CD4-positive, alpha-beta memory T cell (primary cell): ENCODE measurements at regions of chr22 and their contacts with region 1.

Region 1: DNA sequence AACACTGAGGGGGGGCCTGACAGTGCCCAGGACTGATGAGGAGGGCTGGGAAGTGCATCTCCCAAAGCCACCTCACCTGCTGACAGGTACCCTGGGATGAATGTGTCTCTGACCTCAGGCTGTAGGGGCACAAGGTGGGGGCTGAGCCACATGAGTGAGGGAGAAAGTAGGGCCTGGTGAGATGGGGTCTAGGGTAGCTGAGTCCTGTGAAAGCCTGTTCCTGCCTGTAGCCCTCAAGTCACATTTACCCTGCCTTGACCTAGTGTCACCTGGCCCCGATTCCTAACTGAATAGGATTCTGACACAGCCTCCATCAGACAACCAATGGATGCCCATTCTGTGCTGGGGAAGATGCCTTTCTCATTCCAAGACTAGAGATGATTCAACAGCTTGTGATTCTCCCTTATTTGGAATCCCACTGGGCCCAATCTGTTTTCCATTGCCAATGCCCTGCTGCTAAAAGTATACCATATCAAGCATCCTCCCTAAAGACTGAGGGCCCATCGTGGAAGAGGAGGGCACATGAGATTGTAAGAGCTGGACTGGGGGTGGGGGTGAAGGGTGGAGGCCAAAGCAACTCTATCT is 11.1 kb upstream of the RFPL1 start:
- DNase-seq: no peak
- H3K4me3 ChIP-seq: no peak overlapping the region
- H3K4me3 Mint-ChIP-seq: no peak overlapping the region
- H3K27ac ChIP-seq: no peak overlapping the region
- H3K27ac Mint-ChIP-seq: no peak overlapping the region
- H3K4me1 ChIP-seq: no peaks in the 10 kb centered on the region
- H3K4me1 Mint-ChIP-seq: no peaks in the 10 kb centered on the region
- H3K27me3 ChIP-seq: no peaks in the 10 kb centered on the region
- H3K27me3 Mint-ChIP-seq: peaks cover 5 to 7% of the 10 kb centered on the region in 2 donors

Region 2: DNA sequence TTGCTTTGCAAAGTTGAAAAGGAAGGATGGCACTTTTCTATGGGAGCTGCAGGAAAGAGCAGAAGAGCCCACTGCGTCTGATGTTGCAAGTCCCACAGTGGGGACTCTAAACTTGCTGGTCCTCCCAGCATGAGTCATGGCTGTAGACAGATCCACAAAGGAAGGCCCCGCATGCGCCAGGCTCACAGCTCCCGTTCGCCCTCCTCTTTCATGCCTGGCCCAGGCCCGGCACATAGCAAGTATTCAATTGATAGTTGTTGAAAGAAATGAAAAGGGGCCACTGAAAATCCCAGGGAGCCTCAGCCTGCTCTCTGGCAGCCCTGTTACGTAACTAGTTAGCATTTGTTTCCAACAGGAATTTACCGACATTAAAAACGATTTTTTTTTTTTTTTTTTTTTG is 57.8 kb before region 1 on chr22:
- CTCF ChIA-PET with region 1: no interaction called
- POLR2A ChIA-PET with region 1: no interaction called
- intact Hi-C with region 1: loop called (anchors 5 kb)
- DNase-seq: no peak
- H3K4me3 ChIP-seq: no peak overlapping the region
- H3K4me3 Mint-ChIP-seq: no peak overlapping the region
- H3K27ac ChIP-seq: no peak overlapping the region
- H3K27ac Mint-ChIP-seq: peak overlapping the region in 1 of 7 donors; percentile 19
- H3K4me1 ChIP-seq: no peaks in the 10 kb centered on the region
- H3K4me1 Mint-ChIP-seq: peaks cover 5 to 24% (median 8%) of the 10 kb centered on the region in 4 donors
- H3K27me3 ChIP-seq: no peaks in the 10 kb centered on the region
- H3K27me3 Mint-ChIP-seq: no peaks in the 10 kb centered on the region